ENCODE measurements at regions of chr6 and their contacts with region 1.

Region 1: DNA sequence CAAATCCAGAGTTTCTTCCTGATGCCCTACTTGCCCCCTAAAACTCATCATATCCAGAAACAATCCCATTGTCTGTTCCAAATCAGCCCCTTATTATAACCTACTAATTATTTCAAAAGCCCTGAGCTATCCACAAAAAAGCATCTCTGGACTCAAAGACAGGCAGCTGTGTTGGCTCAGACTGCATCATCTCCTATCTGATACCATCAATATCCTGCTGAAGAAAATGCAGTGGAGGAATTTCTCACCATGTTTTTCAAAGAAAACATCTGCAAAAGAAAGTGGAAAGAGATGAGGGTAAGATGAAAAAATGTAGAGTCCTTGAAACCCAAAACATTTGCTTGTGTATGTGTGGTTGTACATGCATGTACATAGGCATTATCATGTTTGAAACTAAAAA is 153.0 kb upstream of the DEFB112 start:
- DNase-seq: no peak
- H3K4me3 ChIP-seq: no peak overlapping the region
- H3K27ac ChIP-seq: no peak overlapping the region
- H3K4me1 ChIP-seq: no peaks in the 10 kb centered on the region
- H3K27me3 ChIP-seq: no peaks in the 10 kb centered on the region
- CTCF ChIP-seq: no peak
- EP300 ChIP-seq: no peak
- POLR2A ChIP-seq: no peak

Region 2: GRCh38 chr6:49978332-49979226 is 224.2 kb before region 1 on chr6:
- in situ Hi-C with region 1: no loop called
- intact Hi-C with region 1: loop called (anchors 10 kb)
- DNase-seq: no peak
- H3K4me3 ChIP-seq: no peak overlapping the region
- H3K27ac ChIP-seq: no peak overlapping the region
- H3K4me1 ChIP-seq: no peaks in the 10 kb centered on the region
- H3K27me3 ChIP-seq: no peaks in the 10 kb centered on the region
- CTCF ChIP-seq: no peak
- EP300 ChIP-seq: no peak
- POLR2A ChIP-seq: no peak